ENCODE measurements at regions of chr17 and their contacts with region 1.

Region 1: DNA sequence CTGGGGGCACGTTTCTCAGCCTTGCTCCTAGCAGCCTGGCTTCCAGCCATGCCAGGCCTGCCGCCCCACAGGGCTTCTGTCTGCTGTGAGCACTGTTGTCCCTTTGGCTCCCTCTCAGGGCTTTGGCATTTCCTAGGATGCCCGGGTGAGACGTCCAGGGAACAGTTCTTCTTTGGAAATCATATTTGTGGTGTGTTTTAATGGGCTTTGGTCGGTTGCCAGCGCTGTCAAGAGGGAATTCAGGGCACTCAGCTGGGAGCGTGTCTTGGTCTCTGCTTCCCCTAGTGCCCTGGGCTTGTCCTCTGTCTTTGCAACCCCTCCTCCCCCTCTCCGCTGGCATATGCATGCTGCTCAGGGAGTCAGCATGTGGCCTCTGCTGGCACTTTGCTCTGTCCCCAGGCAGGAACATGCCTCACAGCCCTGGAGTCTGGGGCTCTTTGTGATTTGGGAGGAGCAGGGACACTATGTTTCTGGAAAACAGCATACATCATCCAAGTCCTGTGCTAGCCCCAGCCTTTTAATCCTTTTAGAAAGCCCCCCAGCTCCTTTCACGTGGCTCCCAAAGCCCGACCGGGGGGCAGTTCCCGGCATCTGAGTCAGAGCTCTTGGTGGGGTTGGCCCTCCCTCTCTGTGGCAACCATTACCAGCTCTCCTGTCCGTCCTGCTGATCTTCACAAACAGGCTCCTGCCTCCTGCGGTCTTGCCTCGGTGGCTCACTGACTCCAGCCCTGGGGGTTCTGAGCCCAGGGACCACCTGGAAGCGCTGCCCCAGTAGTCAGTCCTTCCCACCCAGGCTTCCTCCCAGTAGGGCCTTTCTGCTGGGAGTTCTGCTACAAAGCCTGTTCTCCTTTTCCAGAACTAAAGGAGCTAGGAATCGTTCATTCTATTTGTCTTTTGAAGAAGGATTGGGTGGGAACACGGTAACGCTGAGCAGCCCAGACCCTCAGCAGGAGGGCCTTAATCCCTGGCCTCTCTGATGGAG is 26.7 kb downstream of the SAP30BP start:
- DNase-seq: no peak
- ATAC-seq: no peak
- H3K4me3 ChIP-seq: no peak overlapping the region
- H3K27ac ChIP-seq: no peak overlapping the region
- H3K4me1 ChIP-seq: no peaks in the 10 kb centered on the region; a peak in 1 of 5 replicates
- H3K27me3 ChIP-seq: no peaks in the 10 kb centered on the region
- CTCF ChIP-seq: no peak
- EP300 ChIP-seq: no peak
- POLR2A ChIP-seq: no peak
- RAD21 ChIP-seq: no peak

Region 2: GRCh38 chr17:75679706-75680442 is 13.9 kb before region 1 on chr17:
- CTCF ChIA-PET with region 1: no interaction called
- POLR2A ChIA-PET with region 1: interaction called, 13 read pairs
- in situ Hi-C with region 1: no loop called
- intact Hi-C with region 1: no loop called
- DNase-seq: no peak
- ATAC-seq: no peak
- H3K4me3 ChIP-seq: no peak overlapping the region
- H3K27ac ChIP-seq: no peak overlapping the region
- H3K4me1 ChIP-seq: peaks cover 0 to 15% of the 10 kb centered on the region in 2 experiments; a peak in 2 of 5 replicates
- H3K27me3 ChIP-seq: no peaks in the 10 kb centered on the region
- CTCF ChIP-seq: peak in 1 of 3 experiments; percentile 21; a peak in 2 of 6 replicates
- EP300 ChIP-seq: no peak
- POLR2A ChIP-seq: no peak
- RAD21 ChIP-seq: peak in 1 of 2 experiments; percentile 19; a peak in 1 of 4 replicates

Measured in K562 (cell line).